ENCODE measurements at regions of chr6 and their contacts with region 1.

Region 1: DNA sequence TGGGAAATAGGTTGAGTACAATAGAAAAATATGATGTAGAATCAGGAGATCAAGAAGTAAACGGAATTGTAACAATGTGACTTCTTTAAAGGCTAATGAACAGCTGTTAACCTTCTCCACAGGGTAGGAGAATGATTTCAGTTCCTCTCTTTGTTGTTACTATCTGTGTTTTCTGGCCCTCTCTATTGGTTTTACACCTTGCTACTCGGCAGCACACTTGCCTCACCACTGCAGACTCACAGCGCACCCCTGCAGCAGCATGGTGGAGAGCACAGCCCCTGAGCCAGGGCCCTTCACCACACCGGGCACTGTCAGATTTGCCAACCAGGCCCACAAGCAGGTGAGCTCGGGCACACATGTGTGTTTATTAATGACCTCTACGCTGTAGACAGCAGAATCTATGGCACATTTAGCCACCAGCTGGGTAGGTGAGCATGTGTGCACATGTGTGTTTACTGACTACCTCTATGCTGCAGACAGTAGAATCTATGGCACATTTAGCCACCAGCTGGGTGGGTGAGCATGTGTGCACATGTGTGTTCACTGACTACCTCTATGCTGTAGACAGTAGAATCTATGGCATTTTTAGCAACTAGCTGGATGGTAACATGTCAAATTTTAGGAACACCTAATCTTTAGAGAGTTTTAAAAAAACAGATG is 16.8 kb downstream of the SFT2D1 start:
- DNase-seq: peak; percentile 58
- CTCF ChIP-seq: no peak

Region 2: DNA sequence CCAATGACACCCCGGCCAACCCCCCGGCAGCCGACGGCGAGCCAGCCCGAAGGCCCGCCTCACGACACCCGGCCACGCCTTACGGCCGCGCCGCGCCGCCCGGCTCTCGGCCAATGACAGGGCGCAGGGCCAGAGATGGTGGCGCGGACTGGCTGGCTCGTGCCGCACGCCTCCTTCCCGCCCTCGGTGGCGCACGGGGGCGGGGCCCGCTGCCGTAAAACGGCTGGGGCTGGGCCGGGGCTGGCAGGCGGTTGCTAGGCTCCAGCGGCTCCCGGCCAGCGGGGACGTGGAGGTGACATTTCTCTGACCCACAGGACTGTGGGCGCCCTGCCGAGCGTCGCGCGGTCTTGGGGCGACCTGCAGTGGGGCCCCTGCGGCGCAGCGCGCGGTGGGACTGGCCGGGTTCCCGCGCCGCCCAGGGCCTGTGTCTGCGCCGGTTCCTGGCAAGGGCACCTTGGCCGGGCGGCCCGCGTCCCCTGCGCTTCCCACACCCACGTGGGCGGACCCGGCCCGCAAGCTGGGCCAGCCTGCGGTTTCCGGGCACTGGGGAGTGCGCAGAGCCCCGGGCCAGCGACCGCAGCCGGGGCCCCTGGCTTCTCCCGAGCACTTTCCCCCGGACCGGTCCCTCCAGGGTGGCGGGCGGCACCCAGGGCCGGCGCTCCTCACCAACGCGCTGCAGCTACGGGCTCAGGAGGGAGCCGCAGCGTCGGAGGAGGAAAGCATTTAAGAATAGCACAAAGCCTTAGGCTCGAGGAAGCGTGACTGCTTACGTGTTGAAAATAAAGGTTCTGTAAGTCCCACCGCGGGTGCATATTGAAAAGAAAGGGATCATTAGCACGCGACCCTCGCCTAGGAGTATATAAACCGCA is 57.7 kb after region 1 on chr6 and contains the start of gene MPC1:
- in situ Hi-C with region 1: loop called (anchors 10 kb)
- DNase-seq: peak; percentile 99
- CTCF ChIP-seq: peak; percentile 1